ENCODE measurements at regions of chr10 and their contacts with region 1.

Region 1: DNA sequence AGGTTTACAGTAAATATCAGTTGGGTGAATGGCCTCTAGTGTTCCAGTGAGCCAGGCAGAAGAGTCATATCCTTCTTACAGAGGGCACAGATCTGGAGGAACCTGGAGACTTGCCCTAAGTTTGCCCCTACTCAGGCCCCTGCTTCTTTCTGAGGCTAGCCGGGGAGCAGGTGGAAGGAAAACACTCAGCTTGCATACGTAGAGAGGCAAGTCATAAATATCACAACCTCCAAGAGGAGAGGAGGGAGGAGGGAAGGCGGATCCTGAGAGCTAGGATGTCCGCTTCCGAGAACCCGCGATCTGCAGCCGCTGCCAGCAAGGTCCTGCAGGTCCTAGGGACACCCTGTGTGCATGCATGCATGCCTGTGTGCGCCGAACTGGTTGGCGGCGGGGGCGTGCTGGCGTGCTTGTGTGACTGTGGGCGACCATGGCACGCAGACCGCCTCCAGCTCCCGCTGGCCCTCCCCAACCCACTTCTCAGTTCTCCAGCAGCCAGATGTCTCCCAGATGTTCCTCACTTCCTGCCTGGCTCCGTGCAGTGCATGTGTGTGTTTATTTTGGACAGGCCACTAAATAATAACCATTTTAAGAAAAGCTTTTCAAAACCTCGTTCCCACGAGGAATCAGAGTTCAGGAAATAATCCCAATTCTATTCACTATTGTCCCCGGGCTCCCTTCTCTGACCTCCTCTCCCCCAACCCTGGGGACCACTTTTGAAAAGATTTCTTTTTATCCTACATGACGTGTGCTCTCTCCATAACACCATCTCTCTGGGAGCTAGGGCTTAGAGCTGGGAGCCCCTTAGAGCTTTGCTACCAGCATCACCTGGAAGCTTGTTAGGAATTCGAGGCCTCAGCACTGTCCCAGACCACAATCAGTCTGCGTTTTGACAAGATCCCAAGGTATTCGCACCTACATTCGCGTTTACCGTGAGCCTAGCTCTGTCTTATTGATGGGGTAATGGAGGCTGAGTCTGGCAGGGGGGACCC is 32.4 kb downstream of the UNC5B start:
- DNase-seq: peak; percentile 64

Region 2: DNA sequence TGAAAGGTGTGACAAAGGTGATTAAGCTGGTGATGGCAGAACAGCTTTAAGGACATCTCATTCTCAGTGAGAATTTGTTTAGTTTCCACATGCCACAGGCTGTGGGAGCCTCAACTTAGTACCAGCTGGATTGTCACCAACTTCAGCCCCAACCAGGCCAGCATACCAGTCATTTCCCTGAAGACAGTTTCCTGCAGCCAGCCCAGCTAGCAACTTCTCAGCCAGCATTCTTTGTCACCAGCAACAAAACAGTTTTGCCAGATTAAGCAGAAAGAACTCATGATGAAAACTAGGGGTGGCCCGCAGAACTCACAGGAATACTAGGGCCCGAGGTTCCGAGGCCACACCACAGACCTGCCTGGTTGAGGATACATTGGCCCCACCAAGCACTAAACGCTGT is 101.1 kb before region 1 on chr10:
- in situ Hi-C with region 1: loop called (anchors 5 kb)
- DNase-seq: no peak

Region 3: GRCh38 chr10:71193516-71193915 is 51.2 kb before region 1 on chr10:
- in situ Hi-C with region 1: no loop called
- DNase-seq: no peak